ENCODE measurements at regions of chr1 and their contacts with region 1.

Region 1: DNA sequence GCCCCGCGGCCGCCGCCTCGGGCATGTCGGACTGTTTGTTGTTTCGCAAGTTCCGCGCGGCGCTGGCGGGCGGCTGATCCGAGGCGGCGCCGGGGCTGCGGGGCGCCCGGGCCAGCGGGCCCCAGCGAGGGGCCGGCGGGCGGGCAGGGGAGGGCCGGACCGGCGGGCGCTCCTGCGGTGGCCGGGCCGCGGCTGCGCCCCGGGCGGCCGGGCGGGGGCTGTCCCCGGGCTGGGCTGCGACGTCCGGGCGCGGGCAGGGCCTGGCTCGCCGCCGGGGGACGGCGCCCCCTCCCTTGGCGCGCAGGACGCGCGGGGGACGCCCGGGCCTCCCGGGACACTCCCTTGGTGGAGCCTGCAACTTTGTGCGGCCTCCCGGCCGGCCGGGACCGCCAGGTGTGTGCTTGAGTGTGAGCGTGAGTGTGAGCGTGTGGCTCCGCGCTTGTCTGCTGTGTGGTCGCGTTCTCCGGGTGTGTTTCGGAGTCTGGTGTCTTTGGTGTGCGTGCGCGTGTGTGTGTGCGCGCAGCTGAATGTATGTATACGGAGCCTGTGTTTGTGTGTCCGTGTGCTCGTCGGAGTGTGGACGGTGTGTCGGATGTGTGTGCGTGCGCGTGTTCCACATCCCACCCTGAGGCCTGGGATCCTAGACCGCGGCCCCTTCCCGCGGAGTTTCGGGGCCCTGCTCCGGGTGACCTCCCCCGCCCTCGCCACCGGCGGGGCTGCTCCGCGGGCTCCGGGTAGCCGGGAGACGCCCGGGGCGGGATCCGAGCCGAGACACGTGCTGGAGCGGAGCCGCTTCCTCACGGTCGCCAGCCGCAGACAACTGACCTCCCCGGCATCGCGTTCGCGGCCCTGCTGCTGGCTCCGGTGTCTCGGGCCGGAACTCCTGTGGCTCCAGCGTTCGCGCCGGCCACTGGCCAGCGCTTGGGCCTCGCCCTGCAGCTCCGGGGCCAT is 1.6 kb downstream of the PTPRU start:
- DNase-seq: peak in 1 of 2 experiments; percentile 72
- H3K4me3 ChIP-seq: peak overlapping the region; percentile 58 to 68 (median 60)
- H3K27ac ChIP-seq: no peak overlapping the region
- H3K4me1 ChIP-seq: peaks cover 10 to 33% (median 24%) of the 10 kb centered on the region in 4 experiments
- H3K27me3 ChIP-seq: peaks cover 13 to 34% (median 29%) of the 10 kb centered on the region in 4 experiments
- CTCF ChIP-seq: no peak
- EP300 ChIP-seq: no peak
- POLR2A ChIP-seq: no peak
- RAD21 ChIP-seq: no peak

Region 2: GRCh38 chr1:29083317-29084195 is 154.4 kb before region 1 on chr1:
- CTCF ChIA-PET with region 1: no interaction called
- POLR2A ChIA-PET with region 1: no interaction called
- DNase-seq: no peak
- H3K4me3 ChIP-seq: no peak overlapping the region
- H3K27ac ChIP-seq: no peak overlapping the region
- H3K4me1 ChIP-seq: no peaks in the 10 kb centered on the region
- H3K27me3 ChIP-seq: no peaks in the 10 kb centered on the region
- CTCF ChIP-seq: no peak
- EP300 ChIP-seq: no peak
- POLR2A ChIP-seq: no peak
- RAD21 ChIP-seq: no peak

Region 3: GRCh38 chr1:29222686-29223085 is 15.3 kb before region 1 on chr1:
- CTCF ChIA-PET with region 1: no interaction called
- POLR2A ChIA-PET with region 1: no interaction called
- DNase-seq: no peak
- H3K4me3 ChIP-seq: no peak overlapping the region
- H3K27ac ChIP-seq: no peak overlapping the region
- H3K4me1 ChIP-seq: peaks cover 0 to 6% (median 3%) of the 10 kb centered on the region in 4 experiments; a peak in 2 of 7 replicates
- H3K27me3 ChIP-seq: no peaks in the 10 kb centered on the region
- CTCF ChIP-seq: no peak
- EP300 ChIP-seq: no peak
- POLR2A ChIP-seq: no peak
- RAD21 ChIP-seq: no peak

Region 4: DNA sequence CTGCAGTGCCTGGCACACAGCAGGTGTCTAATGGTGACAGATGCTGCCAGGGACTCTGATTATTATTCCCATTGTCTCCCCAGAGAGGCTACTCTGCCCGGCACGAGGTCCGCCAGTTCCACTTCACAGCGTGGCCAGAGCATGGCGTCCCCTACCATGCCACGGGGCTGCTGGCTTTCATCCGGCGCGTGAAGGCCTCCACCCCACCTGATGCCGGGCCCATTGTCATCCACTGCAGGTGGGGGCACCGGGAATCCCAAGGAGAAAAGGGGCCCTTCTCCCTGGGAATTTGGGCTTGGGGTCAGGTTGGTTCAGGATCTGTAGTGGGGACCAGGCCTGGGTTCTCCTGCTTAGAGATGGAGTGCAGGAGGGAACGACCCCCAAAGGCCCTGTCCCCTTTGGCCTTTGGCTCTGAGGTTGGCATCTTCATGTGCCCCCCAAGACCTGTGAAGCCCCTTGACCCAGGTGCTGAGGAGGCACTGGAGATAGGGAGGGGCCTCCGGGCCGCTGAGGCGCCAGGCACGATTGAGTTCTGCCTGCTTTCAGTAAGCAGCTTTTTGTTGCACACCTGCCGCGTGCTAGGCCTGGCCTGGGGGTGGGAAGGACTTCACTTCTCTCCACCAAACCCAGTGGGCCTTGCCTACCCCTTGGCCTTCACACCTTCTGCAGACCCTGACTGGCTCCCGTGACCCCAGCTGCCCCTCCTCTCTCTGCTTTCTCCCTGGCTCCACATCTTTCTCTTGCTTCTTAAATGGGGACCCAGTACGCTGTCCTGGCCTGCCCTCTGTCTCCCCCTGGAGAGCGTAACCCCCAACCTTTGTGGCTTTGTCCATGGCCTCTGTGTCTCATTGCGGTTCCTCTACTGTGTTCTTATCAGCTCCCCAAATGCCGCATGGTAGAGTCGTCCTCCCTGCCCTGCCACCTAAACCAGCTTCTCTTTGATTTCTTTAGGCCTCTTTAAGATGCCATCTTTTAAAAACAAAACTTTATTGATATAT is 74.8 kb after region 1 on chr1:
- CTCF ChIA-PET with region 1: interaction called, 29 read pairs
- POLR2A ChIA-PET with region 1: no interaction called
- DNase-seq: no peak
- H3K4me3 ChIP-seq: no peak overlapping the region
- H3K27ac ChIP-seq: no peak overlapping the region
- H3K4me1 ChIP-seq: no peaks in the 10 kb centered on the region
- H3K27me3 ChIP-seq: no peaks in the 10 kb centered on the region
- CTCF ChIP-seq: peak; percentile 46 to 66 (median 63); a peak in 3 of 4 replicates
- EP300 ChIP-seq: no peak
- POLR2A ChIP-seq: no peak
- RAD21 ChIP-seq: peak; percentile 72 to 76

Region 5: GRCh38 chr1:29322861-29323585 is 85.1 kb after region 1 on chr1:
- CTCF ChIA-PET with region 1: interaction called, 113 read pairs
- POLR2A ChIA-PET with region 1: no interaction called
- DNase-seq: no peak
- H3K4me3 ChIP-seq: no peak overlapping the region
- H3K27ac ChIP-seq: no peak overlapping the region
- H3K4me1 ChIP-seq: peaks cover 5 to 14% (median 10%) of the 10 kb centered on the region in 4 experiments
- H3K27me3 ChIP-seq: no peaks in the 10 kb centered on the region
- CTCF ChIP-seq: no peak
- EP300 ChIP-seq: no peak
- POLR2A ChIP-seq: no peak
- RAD21 ChIP-seq: no peak

Region 6: DNA sequence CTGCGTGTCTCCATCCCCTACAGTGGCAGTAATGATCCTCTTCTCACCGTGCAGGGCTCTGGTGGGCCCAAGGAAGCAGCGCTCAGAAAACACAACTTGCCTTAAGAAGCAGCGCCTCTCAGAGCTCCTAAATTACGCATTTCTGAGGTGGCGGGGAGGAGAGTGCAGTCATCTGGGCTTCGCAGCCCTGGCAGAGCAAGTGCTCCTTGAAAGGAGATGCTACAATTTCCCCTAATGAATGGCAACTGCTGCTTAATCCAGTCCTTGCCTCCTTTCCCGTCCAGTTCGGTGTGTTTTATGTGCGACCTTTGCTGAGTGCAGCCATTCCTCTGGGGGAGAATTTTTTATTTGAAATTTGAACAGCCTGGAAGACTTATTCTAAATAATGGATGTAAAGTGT is 285.6 kb after region 1 on chr1:
- CTCF ChIA-PET with region 1: no interaction called
- POLR2A ChIA-PET with region 1: no interaction called
- DNase-seq: peak in 1 of 2 experiments; percentile 38
- H3K4me3 ChIP-seq: no peak overlapping the region
- H3K27ac ChIP-seq: no peak overlapping the region
- H3K4me1 ChIP-seq: peaks cover 0 to 7% (median 2%) of the 10 kb centered on the region in 4 experiments; a peak in 2 of 7 replicates
- H3K27me3 ChIP-seq: no peaks in the 10 kb centered on the region
- CTCF ChIP-seq: no peak
- EP300 ChIP-seq: no peak
- POLR2A ChIP-seq: no peak
- RAD21 ChIP-seq: no peak